Activated T-helper 2 cell treated with anti-CD3 and anti-CD28 coated beads, Interferon-gamma antibody, Interleukin-2, Interleukin-4, amounts not matched to agents 10 μg/mL and 5 μg/mL and 100 μg/mL, durations not matched to agents 14 hours and 24 hours and 36 hours (primary cell): ENCODE measurements at regions of chr11 and their contacts with region 1.

Region 1: GRCh38 chr11:96012086-96012824 is 88.3 kb upstream of the MTMR2 start:
- DNase-seq: peak; percentile 34
- H3K4me3 Mint-ChIP-seq: peak overlapping the region; percentile 21
- H3K27ac Mint-ChIP-seq: peak overlapping the region; percentile 71
- H3K4me1 Mint-ChIP-seq: peaks cover 49% of the 10 kb centered on the region
- H3K27me3 Mint-ChIP-seq: no peaks in the 10 kb centered on the region

Region 2: GRCh38 chr11:95877291-95877690 is 135.0 kb before region 1 on chr11:
- intact Hi-C with region 1: no loop called
- DNase-seq: no peak
- H3K4me3 Mint-ChIP-seq: no peak overlapping the region
- H3K27ac Mint-ChIP-seq: peak overlapping the region; percentile 25
- H3K4me1 Mint-ChIP-seq: peaks cover 3% of the 10 kb centered on the region
- H3K27me3 Mint-ChIP-seq: no peaks in the 10 kb centered on the region

Region 3: DNA sequence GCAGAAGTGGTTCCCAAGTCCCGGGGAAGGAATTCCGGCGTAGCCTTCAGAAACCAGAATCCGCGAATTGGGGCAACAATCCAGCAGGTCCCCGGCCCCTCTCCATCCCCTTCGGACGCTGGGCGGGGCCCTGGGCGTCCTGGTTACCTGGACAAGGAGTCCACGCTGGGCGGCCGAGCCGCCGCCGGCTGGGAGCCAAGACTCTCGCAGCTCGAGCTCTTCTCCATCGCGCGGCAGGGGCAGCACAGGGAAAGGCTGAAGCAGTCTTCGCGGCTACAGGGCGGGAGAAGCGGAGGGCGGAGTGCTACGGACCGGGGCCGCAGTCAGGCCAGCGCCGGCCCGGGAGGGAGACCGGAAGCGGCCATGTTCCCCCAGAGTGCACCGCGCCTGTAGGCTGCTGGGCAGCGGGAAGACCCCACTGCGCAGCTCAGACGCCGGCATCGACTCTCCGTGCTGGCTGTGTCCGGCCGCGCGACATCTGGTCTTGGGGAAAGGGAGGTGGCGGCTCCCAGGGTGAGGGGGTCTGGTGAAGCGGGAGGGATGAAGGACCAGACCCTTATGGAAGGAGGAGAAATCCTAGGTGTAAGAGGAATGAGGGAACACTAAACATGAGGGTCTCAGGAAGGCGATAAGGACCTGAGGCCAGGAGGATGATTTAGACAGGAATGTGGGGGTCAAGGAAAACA is 88.4 kb before region 1 on chr11 and contains the start of gene MTMR2:
- intact Hi-C with region 1: loop called (anchors 5 kb)
- DNase-seq: peak; percentile 39
- H3K4me3 Mint-ChIP-seq: peak within 1 kb of the TSS; percentile 100
- H3K27ac Mint-ChIP-seq: peak within 1 kb of the TSS; percentile 99
- H3K4me1 Mint-ChIP-seq: peaks cover 23% of the 10 kb centered on the region
- H3K27me3 Mint-ChIP-seq: peaks cover 6% of the 10 kb centered on the region
- total RNA-seq, gene MTMR2: 41.7 and 45.4 TPM in 2 replicates

Region 4: DNA sequence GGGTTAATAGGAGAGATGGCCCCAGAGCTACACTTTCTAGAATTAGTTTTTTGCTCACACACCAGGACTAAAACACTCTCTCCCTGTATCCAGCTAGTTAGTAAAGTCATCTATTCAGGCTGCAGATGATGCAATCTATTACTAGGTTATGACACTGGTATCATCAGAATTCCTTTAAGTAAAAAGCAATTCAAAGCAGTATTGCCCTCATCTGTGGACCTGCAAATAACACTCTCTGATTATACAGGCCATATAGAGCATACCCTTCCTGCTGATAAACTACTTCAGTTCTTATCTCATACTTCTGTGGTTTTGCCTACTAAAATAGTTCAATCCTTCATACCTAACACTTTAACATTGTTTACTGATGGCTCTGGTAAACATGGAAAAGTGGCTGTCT is 74.9 kb before region 1 on chr11:
- intact Hi-C with region 1: no loop called
- DNase-seq: no peak
- H3K4me3 Mint-ChIP-seq: no peak overlapping the region
- H3K27ac Mint-ChIP-seq: no peak overlapping the region
- H3K4me1 Mint-ChIP-seq: no peaks in the 10 kb centered on the region
- H3K27me3 Mint-ChIP-seq: peaks cover 3% of the 10 kb centered on the region

Region 5: GRCh38 chr11:96075532-96075959 is 63.3 kb after region 1 on chr11:
- intact Hi-C with region 1: loop called (anchors 2 kb)
- DNase-seq: no peak
- H3K4me3 Mint-ChIP-seq: peak overlapping the region; percentile 40
- H3K27ac Mint-ChIP-seq: peak overlapping the region; percentile 84
- H3K4me1 Mint-ChIP-seq: peaks cover 58% of the 10 kb centered on the region
- H3K27me3 Mint-ChIP-seq: no peaks in the 10 kb centered on the region

Region 6: GRCh38 chr11:96188243-96189006 is 176.2 kb after region 1 on chr11:
- intact Hi-C with region 1: loop called (anchors 2 kb)
- DNase-seq: peak; percentile 16
- H3K4me3 Mint-ChIP-seq: peak overlapping the region; percentile 9
- H3K27ac Mint-ChIP-seq: peak overlapping the region; percentile 75
- H3K4me1 Mint-ChIP-seq: peaks cover 62% of the 10 kb centered on the region
- H3K27me3 Mint-ChIP-seq: no peaks in the 10 kb centered on the region

Region 7: DNA sequence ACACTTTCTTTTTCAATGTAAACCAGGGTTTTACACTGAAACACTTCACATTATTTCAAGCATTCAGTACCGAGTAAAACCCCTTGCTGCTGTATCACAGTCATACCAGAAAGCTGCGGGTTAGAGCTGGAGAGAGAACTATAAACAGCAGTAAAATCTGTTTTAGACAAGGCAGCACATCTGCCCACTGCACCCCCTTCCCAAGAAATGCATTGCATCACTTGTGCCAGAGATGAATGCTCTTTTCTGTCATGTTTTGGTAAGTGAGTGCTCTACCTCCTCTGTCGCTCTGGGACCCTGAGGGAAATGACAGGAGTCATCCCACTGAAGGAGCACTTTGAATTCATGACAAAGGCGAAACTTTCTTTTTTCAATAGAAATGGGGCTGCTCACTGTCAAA is 223.5 kb after region 1 on chr11:
- intact Hi-C with region 1: loop called (anchors 5 kb)
- DNase-seq: peak; percentile 52
- H3K4me3 Mint-ChIP-seq: peak overlapping the region; percentile 65
- H3K27ac Mint-ChIP-seq: peak overlapping the region; percentile 89
- H3K4me1 Mint-ChIP-seq: peaks cover 36% of the 10 kb centered on the region
- H3K27me3 Mint-ChIP-seq: no peaks in the 10 kb centered on the region